ENCODE measurements at regions of chr14 and their contacts with region 1.

Region 1: DNA sequence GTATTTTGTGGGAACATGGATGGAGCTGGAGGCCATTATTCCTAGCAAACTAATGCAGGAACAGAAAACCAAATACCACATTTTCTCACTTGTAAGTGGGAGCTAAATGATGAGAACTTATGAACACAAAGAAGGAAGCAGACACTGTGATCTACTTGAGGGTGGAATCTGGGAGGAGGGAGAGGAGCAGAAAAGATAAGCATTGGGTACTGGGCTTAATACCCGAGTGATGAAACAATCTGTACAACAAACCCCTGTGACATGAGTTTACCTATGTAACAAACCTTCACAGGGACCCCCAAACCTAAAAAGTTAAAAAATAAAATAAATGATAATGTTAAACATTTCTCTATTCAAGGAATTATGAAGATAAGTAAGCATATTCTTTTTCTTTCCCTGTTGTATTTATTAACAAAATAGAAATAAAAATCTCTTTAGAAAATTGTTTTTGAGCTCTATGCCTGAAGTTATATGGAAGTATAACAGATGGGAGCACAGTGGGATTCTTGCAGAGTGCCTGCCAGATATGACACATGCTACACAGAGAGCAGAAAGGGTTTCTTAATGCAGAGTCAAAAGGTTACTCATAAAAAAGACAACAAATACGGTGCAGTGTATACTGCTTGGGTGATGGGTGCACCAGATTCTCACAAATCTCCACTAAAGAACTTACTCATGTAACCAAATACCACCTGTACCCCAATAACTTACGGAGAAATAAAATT is 52.0 kb upstream of the SYNE2 start:
- DNase-seq: no peak
- ATAC-seq: no peak
- H3K4me3 ChIP-seq: no peak overlapping the region
- H3K27ac ChIP-seq: no peak overlapping the region
- H3K4me1 ChIP-seq: no peaks in the 10 kb centered on the region
- H3K27me3 ChIP-seq: peaks cover 2% of the 10 kb centered on the region
- CTCF ChIP-seq: no peak
- POLR2A ChIP-seq: no peak
- RAD21 ChIP-seq: no peak

Region 2: DNA sequence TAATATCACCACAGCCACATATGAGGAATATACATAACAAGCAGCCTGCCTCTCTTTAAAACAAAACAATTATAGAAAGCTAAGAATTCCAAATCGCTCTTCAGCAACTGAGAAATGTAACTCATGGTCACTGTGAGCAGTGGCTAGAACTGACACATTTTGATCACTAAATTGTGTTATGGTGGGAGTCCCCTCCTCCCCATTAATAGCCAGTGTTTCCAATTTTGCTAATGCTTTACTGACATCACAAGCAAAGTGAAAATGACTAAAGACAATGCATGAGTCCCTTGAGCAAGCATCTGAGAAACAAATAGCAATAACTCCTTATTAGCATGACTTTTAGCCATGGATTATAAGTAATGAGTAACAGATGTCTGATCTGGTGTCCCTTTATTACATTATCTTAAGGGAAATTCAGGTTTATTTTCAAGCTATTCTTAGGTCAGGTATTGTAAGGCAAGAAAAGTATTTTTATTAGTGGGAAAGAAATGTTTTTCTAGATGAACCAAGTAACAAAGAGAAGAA is 903.8 kb before region 1 on chr14:
- CTCF ChIA-PET with region 1: no interaction called
- POLR2A ChIA-PET with region 1: no interaction called
- dilution Hi-C with region 1: no loop called
- in situ Hi-C with region 1: no loop called
- intact Hi-C with region 1: no loop called
- DNase-seq: no peak
- ATAC-seq: no peak
- H3K4me3 ChIP-seq: no peak overlapping the region
- H3K27ac ChIP-seq: no peak overlapping the region
- H3K4me1 ChIP-seq: no peaks in the 10 kb centered on the region
- H3K27me3 ChIP-seq: no peaks in the 10 kb centered on the region
- CTCF ChIP-seq: no peak
- POLR2A ChIP-seq: no peak
- RAD21 ChIP-seq: no peak

Region 3: DNA sequence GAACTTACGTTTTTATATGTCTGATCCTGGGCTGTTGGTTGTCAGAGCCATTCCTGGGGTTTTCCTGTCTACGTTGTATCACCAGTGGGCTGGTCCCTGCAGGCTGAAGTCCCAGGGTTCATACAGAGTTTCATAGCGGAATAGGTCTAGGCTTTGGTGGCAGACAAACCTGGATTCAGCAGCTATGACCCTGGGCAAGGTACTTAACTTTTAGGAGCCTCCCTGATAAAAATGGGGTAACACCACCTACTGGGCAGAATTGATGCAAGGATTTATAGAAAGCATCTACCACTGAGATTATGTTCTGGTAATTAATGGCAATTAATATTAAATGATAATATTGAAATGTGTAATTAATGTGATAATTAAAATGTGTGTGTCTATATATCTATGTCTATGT is 193.2 kb after region 1 on chr14:
- CTCF ChIA-PET with region 1: no interaction called
- POLR2A ChIA-PET with region 1: no interaction called
- dilution Hi-C with region 1: no loop called
- in situ Hi-C with region 1: no loop called
- intact Hi-C with region 1: loop called (anchors 10 kb)
- DNase-seq: no peak
- ATAC-seq: no peak
- H3K4me3 ChIP-seq: no peak overlapping the region
- H3K27ac ChIP-seq: no peak overlapping the region
- H3K4me1 ChIP-seq: no peaks in the 10 kb centered on the region
- H3K27me3 ChIP-seq: no peaks in the 10 kb centered on the region
- CTCF ChIP-seq: no peak; the same call in 1 of the 2 replicates
- POLR2A ChIP-seq: no peak
- RAD21 ChIP-seq: no peak

Region 4: GRCh38 chr14:64012720-64013119 is 211.9 kb after region 1 on chr14:
- CTCF ChIA-PET with region 1: no interaction called
- POLR2A ChIA-PET with region 1: no interaction called
- dilution Hi-C with region 1: no loop called
- in situ Hi-C with region 1: no loop called
- intact Hi-C with region 1: no loop called
- DNase-seq: no peak
- ATAC-seq: no peak
- H3K4me3 ChIP-seq: no peak overlapping the region
- H3K27ac ChIP-seq: no peak overlapping the region
- H3K4me1 ChIP-seq: no peaks in the 10 kb centered on the region
- H3K27me3 ChIP-seq: no peaks in the 10 kb centered on the region
- CTCF ChIP-seq: no peak
- POLR2A ChIP-seq: no peak
- RAD21 ChIP-seq: no peak

Region 5: GRCh38 chr14:64026600-64026999 is 225.8 kb after region 1 on chr14:
- CTCF ChIA-PET with region 1: no interaction called
- POLR2A ChIA-PET with region 1: no interaction called
- dilution Hi-C with region 1: no loop called
- in situ Hi-C with region 1: no loop called
- intact Hi-C with region 1: loop called (anchors 10 kb)
- DNase-seq: no peak
- ATAC-seq: no peak
- H3K4me3 ChIP-seq: no peak overlapping the region
- H3K27ac ChIP-seq: no peak overlapping the region
- H3K4me1 ChIP-seq: peaks cover 1% of the 10 kb centered on the region; the same call in 1 of the 2 replicates
- H3K27me3 ChIP-seq: no peaks in the 10 kb centered on the region
- CTCF ChIP-seq: no peak
- POLR2A ChIP-seq: no peak
- RAD21 ChIP-seq: no peak

Measured in IMR-90 (cell line).